ENCODE measurements at regions of chr6 and their contacts with region 1.

Region 1: DNA sequence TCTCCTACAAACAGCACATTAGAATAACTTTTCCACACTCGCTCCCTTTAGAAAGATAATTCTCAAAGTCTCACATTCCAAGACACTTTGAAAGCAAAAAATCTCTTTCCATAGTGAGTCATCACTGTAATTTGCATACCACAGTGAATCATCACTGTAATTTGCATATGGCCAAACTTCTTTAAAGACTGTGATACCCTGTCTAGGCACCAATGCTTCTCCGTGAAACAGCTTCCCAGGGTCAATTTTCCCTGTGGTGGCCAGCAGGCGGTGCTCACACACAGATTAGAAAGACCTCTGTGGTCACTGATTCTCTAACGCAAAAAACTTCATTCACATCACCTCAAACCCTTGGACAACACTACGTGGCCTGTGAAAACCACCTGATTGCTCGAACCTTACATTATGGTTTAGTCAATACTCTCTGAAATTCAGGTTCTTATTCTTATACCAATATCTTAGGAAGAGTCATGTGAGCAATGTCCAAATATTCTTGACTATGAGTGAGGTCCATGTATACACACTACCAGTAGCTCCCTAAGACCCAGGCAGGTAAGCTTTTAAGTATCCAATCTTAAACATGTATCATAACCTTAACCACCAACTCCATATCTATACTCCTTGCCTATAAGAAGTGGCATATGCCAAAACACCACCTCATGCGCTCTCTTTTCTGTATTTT is 78.5 kb upstream of the PHACTR1 start:
- H3K4me3 Mint-ChIP-seq: no peak overlapping the region
- H3K27ac Mint-ChIP-seq: no peak overlapping the region
- H3K4me1 Mint-ChIP-seq: peaks cover 23% of the 10 kb centered on the region
- H3K27me3 Mint-ChIP-seq: peaks cover 16% of the 10 kb centered on the region

Region 2: GRCh38 chr6:12844290-12845223 is 206.5 kb after region 1 on chr6:
- intact Hi-C with region 1: loop called (anchors 5 kb)
- H3K4me3 Mint-ChIP-seq: no peak overlapping the region
- H3K27ac Mint-ChIP-seq: no peak overlapping the region
- H3K4me1 Mint-ChIP-seq: no peaks in the 10 kb centered on the region
- H3K27me3 Mint-ChIP-seq: peaks cover 2% of the 10 kb centered on the region

Region 3: DNA sequence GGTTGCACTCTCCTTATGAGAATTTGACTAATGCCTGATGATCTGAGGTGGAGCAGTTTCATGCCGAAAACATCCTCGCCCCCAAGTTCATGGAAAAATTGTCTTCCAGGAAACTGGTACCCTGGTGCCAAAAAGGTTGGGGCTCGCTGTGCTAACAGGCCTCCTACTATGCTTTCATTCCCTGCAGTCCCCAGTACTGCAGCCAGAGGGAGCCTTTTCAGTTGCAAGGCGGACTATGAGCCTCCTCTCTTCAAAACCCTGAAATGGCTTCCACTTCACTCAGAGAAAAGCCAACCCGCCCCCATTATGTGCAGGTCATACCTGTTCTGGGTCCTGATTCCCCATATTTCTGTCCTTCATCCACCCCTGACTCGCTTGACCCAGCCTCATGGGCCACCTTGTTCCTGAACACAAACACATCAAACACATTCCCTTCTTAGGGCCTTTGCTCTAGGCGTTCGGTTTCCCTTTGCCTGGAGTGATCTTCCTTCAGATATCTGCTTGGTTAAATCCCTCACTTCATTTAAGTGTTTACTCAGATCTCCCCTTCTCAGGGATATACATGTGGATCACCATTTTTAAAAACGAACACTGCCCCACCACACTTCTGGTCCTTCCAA is 252.2 kb after region 1 on chr6:
- intact Hi-C with region 1: loop called (anchors 1 kb)
- H3K4me3 Mint-ChIP-seq: no peak overlapping the region
- H3K27ac Mint-ChIP-seq: no peak overlapping the region
- H3K4me1 Mint-ChIP-seq: no peaks in the 10 kb centered on the region
- H3K27me3 Mint-ChIP-seq: peaks cover 8% of the 10 kb centered on the region